CD4-positive, alpha-beta memory T cell (primary cell): ENCODE measurements at regions of chr17 and their contacts with region 1.

Region 1: DNA sequence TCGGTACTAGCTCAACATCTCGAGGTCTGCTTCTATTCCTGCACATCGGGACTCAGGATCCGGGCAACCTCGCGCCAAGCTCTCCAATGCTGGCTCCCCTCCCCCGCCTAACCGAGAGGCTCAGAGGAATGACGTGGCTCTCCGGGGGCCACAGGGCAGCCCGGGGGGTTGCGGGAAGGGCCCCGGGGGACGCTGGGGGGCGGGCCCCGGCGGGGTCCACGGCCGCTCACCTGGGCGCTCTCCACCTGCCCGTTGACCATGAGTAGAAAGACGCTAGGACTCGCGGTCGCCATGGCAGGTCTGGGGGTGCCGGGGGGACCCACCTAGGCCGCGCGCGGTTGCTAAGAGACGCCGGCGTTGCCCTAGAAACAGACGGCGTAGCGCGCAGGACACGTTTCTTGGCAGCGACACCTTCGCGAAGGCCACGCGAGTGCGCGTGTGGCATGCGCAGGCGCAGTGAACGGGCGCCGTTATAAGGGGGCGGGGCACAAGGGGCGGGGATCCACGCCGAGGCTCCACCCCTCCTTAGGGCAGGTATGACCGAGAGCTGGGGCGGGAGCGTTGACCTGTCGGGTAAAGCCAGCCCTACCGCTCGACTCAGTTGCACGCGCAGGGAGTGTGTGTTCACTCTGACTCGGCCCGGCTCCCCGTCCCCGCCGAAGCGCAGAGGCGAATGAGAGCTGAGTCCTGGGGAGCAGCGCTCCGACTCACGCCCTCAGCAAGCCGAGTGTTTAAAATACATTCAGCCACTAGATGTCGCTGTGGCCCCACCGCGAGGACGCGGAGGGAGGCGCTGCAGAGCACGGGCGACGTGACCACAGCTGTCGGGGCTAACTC is at the start of gene B9D1:
- DNase-seq: peak; percentile 92 to 96 (median 92)
- H3K4me3 ChIP-seq: peak within 1 kb of the TSS; percentile 70 to 88
- H3K4me3 Mint-ChIP-seq: peak within 1 kb of the TSS; percentile 90 to 96 (median 92)
- H3K27ac ChIP-seq: peak within 1 kb of the TSS; percentile 59
- H3K27ac Mint-ChIP-seq: peak within 1 kb of the TSS; percentile 88 to 95 (median 92)
- H3K4me1 ChIP-seq: peaks cover 6% of the 10 kb centered on the region
- H3K4me1 Mint-ChIP-seq: peaks cover 5 to 19% (median 6%) of the 10 kb centered on the region in 4 donors
- H3K27me3 ChIP-seq: no peaks in the 10 kb centered on the region
- H3K27me3 Mint-ChIP-seq: peaks cover 5 to 10% of the 10 kb centered on the region in 2 donors
- total RNA-seq, gene B9D1: 2.5 to 2.8 TPM

Region 2: DNA sequence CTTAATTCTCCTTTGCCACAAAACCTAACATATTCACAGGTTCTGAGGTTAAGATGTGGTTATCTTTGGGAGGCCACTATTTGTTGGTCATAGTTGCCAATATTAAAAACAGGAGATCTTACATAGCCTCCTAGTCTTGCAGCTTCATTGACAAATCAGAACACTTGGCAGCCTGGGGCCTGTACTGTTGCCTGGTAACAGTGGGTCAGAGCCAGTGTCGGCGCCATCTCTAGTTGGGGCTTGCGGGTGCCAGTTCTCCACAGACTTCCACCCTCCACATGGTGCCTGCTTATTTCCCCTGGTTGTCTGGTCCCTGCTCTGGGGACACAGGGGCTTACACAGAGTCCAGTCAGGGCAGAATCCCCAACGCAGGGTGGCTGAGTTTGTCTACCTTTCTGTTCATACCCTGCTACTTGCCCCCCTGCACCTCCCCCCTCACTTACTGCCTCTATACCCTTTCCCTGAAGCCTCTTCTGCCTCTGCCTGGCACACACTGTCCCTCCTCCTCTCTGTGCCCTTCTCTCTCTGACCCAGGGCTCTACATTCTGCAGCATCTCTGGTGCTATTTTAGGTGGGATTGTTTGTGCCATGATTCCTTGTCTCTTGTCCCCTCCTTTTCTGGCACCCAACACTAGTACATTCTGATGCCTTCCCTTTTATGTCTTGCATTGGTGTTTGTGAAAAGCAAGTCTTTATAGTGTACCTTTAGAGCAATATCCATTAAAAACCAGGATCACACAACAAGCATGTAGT is 111.9 kb before region 1 on chr17:
- CTCF ChIA-PET with region 1: no interaction called
- POLR2A ChIA-PET with region 1: no interaction called
- intact Hi-C with region 1: no loop called
- DNase-seq: no peak
- H3K4me3 ChIP-seq: no peak overlapping the region
- H3K4me3 Mint-ChIP-seq: no peak overlapping the region
- H3K27ac ChIP-seq: no peak overlapping the region
- H3K27ac Mint-ChIP-seq: no peak overlapping the region
- H3K4me1 ChIP-seq: no peaks in the 10 kb centered on the region
- H3K4me1 Mint-ChIP-seq: no peaks in the 10 kb centered on the region
- H3K27me3 ChIP-seq: no peaks in the 10 kb centered on the region
- H3K27me3 Mint-ChIP-seq: peaks cover 0 to 3% of the 10 kb centered on the region in 2 donors

Region 3: GRCh38 chr17:19317359-19318095 is 45.0 kb before region 1 on chr17:
- CTCF ChIA-PET with region 1: no interaction called
- POLR2A ChIA-PET with region 1: no interaction called
- intact Hi-C with region 1: no loop called
- DNase-seq: no peak
- H3K4me3 ChIP-seq: no peak overlapping the region
- H3K4me3 Mint-ChIP-seq: no peak overlapping the region
- H3K27ac ChIP-seq: no peak overlapping the region
- H3K27ac Mint-ChIP-seq: no peak overlapping the region
- H3K4me1 ChIP-seq: no peaks in the 10 kb centered on the region
- H3K4me1 Mint-ChIP-seq: no peaks in the 10 kb centered on the region
- H3K27me3 ChIP-seq: no peaks in the 10 kb centered on the region
- H3K27me3 Mint-ChIP-seq: peaks cover 5 to 7% of the 10 kb centered on the region in 2 donors

Region 4: GRCh38 chr17:19377602-19378392 is 15.3 kb after region 1 on chr17:
- CTCF ChIA-PET with region 1: interaction called, 84 read pairs
- POLR2A ChIA-PET with region 1: interaction called, 47 read pairs
- intact Hi-C with region 1: loop called (anchors 1 kb)
- DNase-seq: peak; percentile 94 to 96 (median 95)
- H3K4me3 ChIP-seq: peak overlapping the region; percentile 96 to 98
- H3K4me3 Mint-ChIP-seq: peak overlapping the region; percentile 94 to 100 (median 99)
- H3K27ac ChIP-seq: peak overlapping the region; percentile 91
- H3K27ac Mint-ChIP-seq: peak overlapping the region; percentile 91 to 99 (median 98)
- H3K4me1 ChIP-seq: peaks cover 19% of the 10 kb centered on the region
- H3K4me1 Mint-ChIP-seq: peaks cover 12 to 49% (median 18%) of the 10 kb centered on the region in 4 donors
- H3K27me3 ChIP-seq: no peaks in the 10 kb centered on the region
- H3K27me3 Mint-ChIP-seq: no peaks in the 10 kb centered on the region

Region 5: GRCh38 chr17:19433727-19434340 is 71.3 kb after region 1 on chr17:
- CTCF ChIA-PET with region 1: interaction called, 13 read pairs
- POLR2A ChIA-PET with region 1: no interaction called
- intact Hi-C with region 1: no loop called
- DNase-seq: no peak
- H3K4me3 ChIP-seq: no peak overlapping the region
- H3K4me3 Mint-ChIP-seq: no peak overlapping the region
- H3K27ac ChIP-seq: no peak overlapping the region
- H3K27ac Mint-ChIP-seq: no peak overlapping the region
- H3K4me1 ChIP-seq: no peaks in the 10 kb centered on the region
- H3K4me1 Mint-ChIP-seq: no peaks in the 10 kb centered on the region
- H3K27me3 ChIP-seq: no peaks in the 10 kb centered on the region
- H3K27me3 Mint-ChIP-seq: no peaks in the 10 kb centered on the region

Region 6: GRCh38 chr17:19457830-19458271 is 95.4 kb after region 1 on chr17:
- CTCF ChIA-PET with region 1: interaction called, 22 read pairs
- POLR2A ChIA-PET with region 1: interaction called, 4 read pairs
- intact Hi-C with region 1: no loop called
- DNase-seq: no peak
- H3K4me3 ChIP-seq: no peak overlapping the region
- H3K4me3 Mint-ChIP-seq: no peak overlapping the region
- H3K27ac ChIP-seq: no peak overlapping the region
- H3K27ac Mint-ChIP-seq: peak overlapping the region in 1 of 7 donors; percentile 22
- H3K4me1 ChIP-seq: peaks cover 22% of the 10 kb centered on the region
- H3K4me1 Mint-ChIP-seq: peaks cover 12 to 50% (median 27%) of the 10 kb centered on the region in 4 donors
- H3K27me3 ChIP-seq: no peaks in the 10 kb centered on the region
- H3K27me3 Mint-ChIP-seq: peaks cover under 1 to 2% of the 10 kb centered on the region in 2 donors

Region 7: GRCh38 chr17:19507775-19508576 is 145.5 kb after region 1 on chr17:
- CTCF ChIA-PET with region 1: interaction called, 6 read pairs
- POLR2A ChIA-PET with region 1: no interaction called
- intact Hi-C with region 1: loop called (anchors 1 kb)
- DNase-seq: peak; percentile 86 to 90 (median 88)
- H3K4me3 ChIP-seq: peak overlapping the region; percentile 91 to 95
- H3K4me3 Mint-ChIP-seq: peak overlapping the region; percentile 87 to 98 (median 93)
- H3K27ac ChIP-seq: peak overlapping the region; percentile 61
- H3K27ac Mint-ChIP-seq: peak overlapping the region; percentile 86 to 99 (median 98)
- H3K4me1 ChIP-seq: peaks cover 5% of the 10 kb centered on the region
- H3K4me1 Mint-ChIP-seq: peaks cover 5 to 12% (median 9%) of the 10 kb centered on the region in 4 donors
- H3K27me3 ChIP-seq: no peaks in the 10 kb centered on the region
- H3K27me3 Mint-ChIP-seq: peaks cover 1 to 5% of the 10 kb centered on the region in 2 donors